Common myeloid progenitor, CD34-positive (primary cell): ENCODE measurements at regions of chr10 and their contacts with region 1.

Region 1: DNA sequence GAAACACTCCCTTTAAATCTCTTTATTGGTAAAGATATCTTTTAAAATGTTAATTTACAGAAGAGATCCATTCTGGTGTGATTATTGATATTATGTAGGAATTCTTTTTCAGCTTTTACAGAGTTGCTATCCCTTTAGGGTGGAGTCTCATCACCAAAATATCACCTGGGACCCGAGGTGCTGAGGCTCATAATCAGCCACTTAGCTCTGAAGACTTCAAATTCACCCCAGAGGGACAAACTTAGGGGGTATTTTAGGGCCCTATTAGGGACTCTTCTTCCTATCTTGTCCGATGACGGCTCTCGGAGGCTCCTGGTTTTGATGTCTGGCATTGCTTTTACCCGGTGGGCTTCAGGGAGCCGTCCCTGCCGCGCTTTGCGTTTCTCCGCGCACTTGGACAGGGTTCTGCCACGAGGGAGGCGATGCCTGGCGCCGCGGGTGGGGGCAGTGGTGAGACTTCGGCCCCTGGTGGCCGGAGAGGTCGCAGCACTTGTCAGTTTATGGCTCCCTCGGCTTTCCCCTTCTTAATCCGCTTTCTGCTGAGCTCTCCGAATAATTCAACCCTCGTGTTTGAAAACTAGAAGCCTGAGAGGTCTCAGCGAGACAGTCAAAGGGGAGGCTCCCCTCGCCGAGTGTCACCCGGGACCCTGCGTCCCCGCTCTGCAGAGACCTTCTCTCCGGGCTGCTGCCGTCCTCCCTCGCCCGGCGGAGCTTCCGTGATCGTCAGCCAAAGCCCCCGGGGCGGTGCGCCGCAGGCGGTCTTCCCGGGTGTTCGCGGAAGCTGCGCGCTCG is 27.8 kb downstream of the RBM20 start:
- DNase-seq: peak; percentile 84 to 87 (median 85)
- H3K4me3 ChIP-seq: peak overlapping the region; percentile 65 to 90 (median 79)
- H3K27ac ChIP-seq: peak overlapping the region in 1 of 2 experiments; percentile 65
- H3K4me1 ChIP-seq: peaks cover 0 to 10% (median 5%) of the 10 kb centered on the region in 4 experiments
- H3K27me3 ChIP-seq: peaks cover 2 to 17% (median 7%) of the 10 kb centered on the region in 5 experiments

Region 2: GRCh38 chr10:110610308-110610774 is 61.6 kb before region 1 on chr10:
- CTCF ChIA-PET with region 1: interaction called, 27 read pairs
- POLR2A ChIA-PET with region 1: interaction called, 3 read pairs
- DNase-seq: peak; percentile 56 to 75 (median 74)
- H3K4me3 ChIP-seq: no peak overlapping the region
- H3K27ac ChIP-seq: no peak overlapping the region
- H3K4me1 ChIP-seq: peaks cover 1 to 23% (median 5%) of the 10 kb centered on the region in 4 experiments
- H3K27me3 ChIP-seq: no peaks in the 10 kb centered on the region

Region 3: GRCh38 chr10:110617425-110618229 is 54.4 kb before region 1 on chr10:
- CTCF ChIA-PET with region 1: interaction called, 27 read pairs
- POLR2A ChIA-PET with region 1: interaction called, 3 read pairs
- DNase-seq: no peak
- H3K4me3 ChIP-seq: no peak overlapping the region
- H3K27ac ChIP-seq: no peak overlapping the region
- H3K4me1 ChIP-seq: peaks cover 0 to 8% (median 2%) of the 10 kb centered on the region in 4 experiments
- H3K27me3 ChIP-seq: no peaks in the 10 kb centered on the region

Region 4: GRCh38 chr10:110641256-110641655 is 30.7 kb before region 1 on chr10:
- CTCF ChIA-PET with region 1: interaction called, 14 read pairs
- POLR2A ChIA-PET with region 1: no interaction called
- DNase-seq: peak in 2 of 3 donors; percentile 30 to 35
- H3K4me3 ChIP-seq: no peak overlapping the region
- H3K27ac ChIP-seq: no peak overlapping the region
- H3K4me1 ChIP-seq: peaks cover 0 to 19% (median 18%) of the 10 kb centered on the region in 4 experiments
- H3K27me3 ChIP-seq: peaks cover 28 to 68% (median 49%) of the 10 kb centered on the region in 5 experiments

Region 5: DNA sequence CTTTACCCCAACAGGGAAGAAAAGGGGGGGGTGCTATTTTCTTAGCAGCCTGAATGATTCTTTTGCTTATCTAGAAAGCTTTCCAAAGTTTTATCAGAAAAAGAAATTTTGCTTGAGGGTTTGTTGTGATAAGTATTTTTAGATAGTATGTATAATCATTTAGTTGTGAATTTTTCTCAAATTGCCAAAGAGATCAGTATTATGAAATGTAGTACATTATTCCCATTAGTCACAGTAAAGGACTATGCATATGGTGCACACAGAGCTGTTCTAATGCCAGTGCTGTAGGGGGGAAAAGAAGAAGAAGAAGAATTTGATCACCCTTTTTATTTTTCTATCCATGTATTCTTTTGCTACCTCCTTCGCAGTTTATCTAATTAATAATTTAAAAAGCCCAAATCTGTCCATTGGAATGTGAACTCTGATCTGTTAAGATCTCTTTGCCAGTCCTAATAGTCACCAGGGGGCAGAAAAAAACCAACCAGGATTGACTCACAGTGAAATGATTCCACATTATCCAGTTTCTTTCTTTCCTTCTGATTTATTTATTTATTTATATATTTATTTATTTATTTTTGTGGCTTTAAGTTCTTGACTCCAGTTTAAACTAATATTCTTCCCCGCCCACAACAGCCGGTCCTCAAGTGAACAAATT is 23.2 kb before region 1 on chr10:
- CTCF ChIA-PET with region 1: interaction called, 11 read pairs
- POLR2A ChIA-PET with region 1: no interaction called
- DNase-seq: no peak
- H3K4me3 ChIP-seq: no peak overlapping the region
- H3K27ac ChIP-seq: no peak overlapping the region
- H3K4me1 ChIP-seq: peaks cover 9 to 37% (median 20%) of the 10 kb centered on the region in 4 experiments
- H3K27me3 ChIP-seq: peaks cover 14 to 42% (median 29%) of the 10 kb centered on the region in 5 experiments

Region 6: GRCh38 chr10:110706690-110707098 is 34.7 kb after region 1 on chr10:
- CTCF ChIA-PET with region 1: interaction called, 11 read pairs
- POLR2A ChIA-PET with region 1: no interaction called
- DNase-seq: no peak
- H3K4me3 ChIP-seq: no peak overlapping the region
- H3K27ac ChIP-seq: no peak overlapping the region
- H3K4me1 ChIP-seq: no peaks in the 10 kb centered on the region
- H3K27me3 ChIP-seq: no peaks in the 10 kb centered on the region